ENCODE measurements at regions of chr1 and their contacts with region 1.

Region 1: GRCh38 chr1:117499071-117499470 is 106.8 kb upstream of the TENT5C start:
- DNase-seq: no peak
- ATAC-seq: no peak
- H3K4me3 ChIP-seq: no peak overlapping the region
- H3K27ac ChIP-seq: no peak overlapping the region
- H3K4me1 ChIP-seq: no peaks in the 10 kb centered on the region
- H3K27me3 ChIP-seq: no peaks in the 10 kb centered on the region
- CTCF ChIP-seq: no peak

Region 2: DNA sequence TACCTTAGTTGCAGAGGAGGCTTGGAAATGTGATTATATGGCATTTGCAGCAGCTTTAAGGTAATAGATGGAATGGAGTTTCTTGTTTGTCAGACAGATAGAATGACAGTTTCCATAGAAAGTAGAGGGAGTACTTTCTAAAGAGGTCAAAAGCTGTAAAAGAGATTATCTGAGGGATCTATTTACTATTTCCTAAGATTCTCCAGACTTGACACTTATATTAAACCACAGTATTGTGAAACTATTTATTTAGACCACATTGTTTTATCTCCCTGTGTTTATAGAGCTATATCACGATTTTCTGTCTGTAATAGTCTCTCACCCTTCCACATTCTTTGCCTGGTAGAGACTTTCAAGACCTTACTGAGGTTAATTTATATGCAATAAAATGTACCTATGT is 65.1 kb before region 1 on chr1:
- intact Hi-C with region 1: loop called in 1 of 10 experiments (anchors 2 kb)
- DNase-seq: no peak
- ATAC-seq: no peak
- H3K4me3 ChIP-seq: no peak overlapping the region
- H3K27ac ChIP-seq: no peak overlapping the region
- H3K4me1 ChIP-seq: peaks cover 0 to 6% (median 0%) of the 10 kb centered on the region in 9 donors
- H3K27me3 ChIP-seq: no peaks in the 10 kb centered on the region
- CTCF ChIP-seq: no peak